Naive thymus-derived CD4-positive, alpha-beta T cell (primary cell): ENCODE measurements at regions of chr2 and their contacts with region 1.

Region 1: GRCh38 chr2:10072656-10073480 is 7.3 kb downstream of the CYS1 start:
- DNase-seq: peak; percentile 54 to 82 (median 77)
- ATAC-seq: peak; percentile 97
- H3K4me3 ChIP-seq: no peak overlapping the region
- H3K4me3 Mint-ChIP-seq: peak overlapping the region in 1 of 10 donors; percentile 0
- H3K27ac ChIP-seq: no peak overlapping the region
- H3K27ac Mint-ChIP-seq: no peak overlapping the region
- H3K4me1 ChIP-seq: no peaks in the 10 kb centered on the region
- H3K4me1 Mint-ChIP-seq: peaks cover 0 to 6% (median 3%) of the 10 kb centered on the region in 7 donors
- H3K27me3 ChIP-seq: peaks cover 0 to 3% of the 10 kb centered on the region in 2 donors
- H3K27me3 Mint-ChIP-seq: peaks cover 43 to 53% (median 50%) of the 10 kb centered on the region in 5 donors

Region 2: GRCh38 chr2:9613291-9613690 is 459.6 kb before region 1 on chr2:
- CTCF ChIA-PET with region 1: no interaction called
- POLR2A ChIA-PET with region 1: no interaction called
- intact Hi-C with region 1: no loop called
- DNase-seq: no peak
- ATAC-seq: no peak
- H3K4me3 ChIP-seq: no peak overlapping the region
- H3K4me3 Mint-ChIP-seq: no peak overlapping the region
- H3K27ac ChIP-seq: no peak overlapping the region
- H3K27ac Mint-ChIP-seq: no peak overlapping the region
- H3K4me1 ChIP-seq: peaks cover 12 to 30% of the 10 kb centered on the region in 2 donors
- H3K4me1 Mint-ChIP-seq: peaks cover 57 to 97% (median 89%) of the 10 kb centered on the region in 7 donors
- H3K27me3 ChIP-seq: no peaks in the 10 kb centered on the region
- H3K27me3 Mint-ChIP-seq: no peaks in the 10 kb centered on the region

Region 3: GRCh38 chr2:10057231-10058107 is 15.4 kb before region 1 on chr2:
- CTCF ChIA-PET with region 1: interaction called, 10 read pairs
- POLR2A ChIA-PET with region 1: no interaction called
- intact Hi-C with region 1: no loop called
- DNase-seq: peak in 1 of 9 donors; percentile 48
- ATAC-seq: peak; percentile 20
- H3K4me3 ChIP-seq: no peak overlapping the region
- H3K4me3 Mint-ChIP-seq: peak overlapping the region in 1 of 10 donors; percentile 73
- H3K27ac ChIP-seq: no peak overlapping the region
- H3K27ac Mint-ChIP-seq: no peak overlapping the region
- H3K4me1 ChIP-seq: no peaks in the 10 kb centered on the region
- H3K4me1 Mint-ChIP-seq: peaks cover 0 to 8% (median 6%) of the 10 kb centered on the region in 7 donors
- H3K27me3 ChIP-seq: no peaks in the 10 kb centered on the region
- H3K27me3 Mint-ChIP-seq: peaks cover 0 to 1% (median 0%) of the 10 kb centered on the region in 5 donors

Region 4: GRCh38 chr2:10097352-10098148 is 24.7 kb after region 1 on chr2:
- CTCF ChIA-PET with region 1: interaction called, 11 read pairs
- POLR2A ChIA-PET with region 1: no interaction called
- intact Hi-C with region 1: loop called (anchors 1 kb)
- DNase-seq: peak in 2 of 9 donors; percentile 26 to 53
- ATAC-seq: peak; percentile 77
- H3K4me3 ChIP-seq: no peak overlapping the region
- H3K4me3 Mint-ChIP-seq: no peak overlapping the region
- H3K27ac ChIP-seq: no peak overlapping the region
- H3K27ac Mint-ChIP-seq: peak overlapping the region in 1 of 9 donors; percentile 24
- H3K4me1 ChIP-seq: no peaks in the 10 kb centered on the region
- H3K4me1 Mint-ChIP-seq: peaks cover 0 to 9% (median 1%) of the 10 kb centered on the region in 7 donors
- H3K27me3 ChIP-seq: peaks cover 0 to 2% of the 10 kb centered on the region in 2 donors
- H3K27me3 Mint-ChIP-seq: peaks cover 27 to 54% (median 37%) of the 10 kb centered on the region in 5 donors

Region 5: GRCh38 chr2:10434886-10435819 is 362.3 kb after region 1 on chr2:
- CTCF ChIA-PET with region 1: interaction called, 77 read pairs
- POLR2A ChIA-PET with region 1: interaction called, 5 read pairs
- intact Hi-C with region 1: loop called (anchors 1 kb)
- DNase-seq: peak; percentile 31 to 84 (median 64)
- ATAC-seq: peak; percentile 74
- H3K4me3 ChIP-seq: no peak overlapping the region
- H3K4me3 Mint-ChIP-seq: peak overlapping the region in 1 of 10 donors; percentile 27
- H3K27ac ChIP-seq: no peak overlapping the region
- H3K27ac Mint-ChIP-seq: peak overlapping the region in 2 of 9 donors; percentile 14 to 72
- H3K4me1 ChIP-seq: peaks cover 0 to 5% of the 10 kb centered on the region in 2 donors
- H3K4me1 Mint-ChIP-seq: peaks cover 0 to 20% (median 12%) of the 10 kb centered on the region in 7 donors
- H3K27me3 ChIP-seq: peaks cover 0 to 2% of the 10 kb centered on the region in 2 donors
- H3K27me3 Mint-ChIP-seq: peaks cover 0 to 6% (median 2%) of the 10 kb centered on the region in 5 donors

Region 6: DNA sequence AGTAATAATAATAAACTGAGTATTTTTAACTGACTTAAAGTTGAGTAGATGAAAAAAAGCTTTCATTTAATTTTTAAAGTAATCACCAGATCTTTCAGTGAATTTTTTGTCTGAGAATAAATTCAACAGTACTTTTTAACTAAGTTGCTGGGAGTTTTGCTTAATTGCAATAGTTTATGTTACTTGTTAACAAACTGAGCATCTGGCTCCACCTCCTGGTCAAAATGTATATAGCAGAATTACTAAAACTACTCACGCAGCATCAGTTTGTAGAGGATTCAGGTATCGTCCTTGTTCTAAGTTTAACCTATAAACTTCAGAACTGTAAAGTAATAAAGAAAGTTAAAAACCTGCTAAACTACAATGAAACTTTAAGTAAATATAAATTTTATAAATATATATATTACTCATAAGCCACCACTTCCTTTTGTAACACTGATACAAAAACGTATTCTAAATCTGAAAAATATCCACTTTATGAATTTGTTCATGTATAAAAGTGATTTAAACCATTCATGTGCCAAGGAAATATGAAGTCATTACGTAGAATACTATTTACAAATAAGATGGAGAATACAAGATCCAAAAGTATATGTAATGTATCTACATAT is 595.6 kb after region 1 on chr2:
- CTCF ChIA-PET with region 1: interaction called, 5 read pairs
- POLR2A ChIA-PET with region 1: interaction called, 3 read pairs
- intact Hi-C with region 1: loop called (anchors 1 to 2 kb)
- DNase-seq: peak in 7 of 9 donors; percentile 39 to 63 (median 56)
- ATAC-seq: peak; percentile 71
- H3K4me3 ChIP-seq: no peak overlapping the region
- H3K4me3 Mint-ChIP-seq: no peak overlapping the region
- H3K27ac ChIP-seq: no peak overlapping the region
- H3K27ac Mint-ChIP-seq: no peak overlapping the region
- H3K4me1 ChIP-seq: no peaks in the 10 kb centered on the region
- H3K4me1 Mint-ChIP-seq: peaks cover 0 to 6% (median 0%) of the 10 kb centered on the region in 7 donors
- H3K27me3 ChIP-seq: no peaks in the 10 kb centered on the region
- H3K27me3 Mint-ChIP-seq: no peaks in the 10 kb centered on the region